Calu3 (cell line): ENCODE measurements at regions of chr12 and their contacts with region 1.

Region 1: GRCh38 chr12:90695415-90695814 is 259.6 kb downstream of the CCER1 start:
- DNase-seq: no peak
- H3K4me3 Mint-ChIP-seq: no peak overlapping the region
- H3K27ac Mint-ChIP-seq: no peak overlapping the region
- H3K4me1 Mint-ChIP-seq: no peaks in the 10 kb centered on the region
- H3K27me3 Mint-ChIP-seq: no peaks in the 10 kb centered on the region
- CTCF ChIP-seq: no peak

Region 2: DNA sequence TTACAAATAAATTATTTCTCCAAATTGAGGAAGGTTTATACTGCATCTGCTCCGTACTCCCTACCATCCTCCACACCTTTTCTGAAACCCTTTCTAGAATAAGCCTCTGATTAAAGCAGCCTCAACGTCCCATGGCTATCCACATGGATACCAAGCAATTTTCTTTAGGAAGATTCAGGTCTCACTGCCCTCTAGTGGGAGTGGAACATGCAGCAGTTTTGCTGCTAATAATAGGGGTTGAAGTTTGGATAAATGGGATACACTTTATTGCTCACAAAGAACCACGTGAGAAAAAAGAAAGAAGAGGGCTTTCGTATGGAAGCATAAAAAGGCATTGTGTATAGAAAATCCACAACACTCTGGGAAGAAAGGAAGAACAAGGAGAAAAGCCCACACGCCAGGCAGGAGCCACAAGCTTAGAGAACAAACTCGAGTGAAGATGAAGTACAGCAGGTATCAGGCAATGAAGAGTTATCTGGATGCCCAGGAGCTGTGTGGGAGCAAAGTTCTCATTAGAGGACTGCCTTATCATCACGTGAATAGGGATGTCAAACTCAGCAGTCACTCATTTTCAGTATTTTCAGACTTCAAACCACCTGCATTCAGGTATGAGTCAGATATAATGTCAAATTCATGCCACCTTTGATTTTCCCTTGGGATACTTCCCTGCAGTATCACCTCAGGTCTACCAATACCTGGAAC is 213.8 kb after region 1 on chr12:
- CTCF ChIA-PET with region 1: no interaction called
- intact Hi-C with region 1: loop called (anchors 1 kb)
- DNase-seq: peak; percentile 48
- H3K4me3 Mint-ChIP-seq: no peak overlapping the region
- H3K27ac Mint-ChIP-seq: no peak overlapping the region
- H3K4me1 Mint-ChIP-seq: no peaks in the 10 kb centered on the region
- H3K27me3 Mint-ChIP-seq: no peaks in the 10 kb centered on the region
- CTCF ChIP-seq: peak; percentile 63